Aorta (tissue), 5 donors: ENCODE measurements at regions of chr14 and their contacts with region 1.

Region 1: GRCh38 chr14:68627880-68628607 is 164.8 kb downstream of the ZFP36L1 start:
- DNase-seq: peak; percentile 63 to 74
- ATAC-seq: no peak
- H3K4me3 ChIP-seq: no peak overlapping the region
- H3K27ac ChIP-seq: no peak overlapping the region
- H3K4me1 ChIP-seq: peaks cover 0 to 3% of the 10 kb centered on the region in 2 donors
- H3K27me3 ChIP-seq: no peaks in the 10 kb centered on the region

Region 2: DNA sequence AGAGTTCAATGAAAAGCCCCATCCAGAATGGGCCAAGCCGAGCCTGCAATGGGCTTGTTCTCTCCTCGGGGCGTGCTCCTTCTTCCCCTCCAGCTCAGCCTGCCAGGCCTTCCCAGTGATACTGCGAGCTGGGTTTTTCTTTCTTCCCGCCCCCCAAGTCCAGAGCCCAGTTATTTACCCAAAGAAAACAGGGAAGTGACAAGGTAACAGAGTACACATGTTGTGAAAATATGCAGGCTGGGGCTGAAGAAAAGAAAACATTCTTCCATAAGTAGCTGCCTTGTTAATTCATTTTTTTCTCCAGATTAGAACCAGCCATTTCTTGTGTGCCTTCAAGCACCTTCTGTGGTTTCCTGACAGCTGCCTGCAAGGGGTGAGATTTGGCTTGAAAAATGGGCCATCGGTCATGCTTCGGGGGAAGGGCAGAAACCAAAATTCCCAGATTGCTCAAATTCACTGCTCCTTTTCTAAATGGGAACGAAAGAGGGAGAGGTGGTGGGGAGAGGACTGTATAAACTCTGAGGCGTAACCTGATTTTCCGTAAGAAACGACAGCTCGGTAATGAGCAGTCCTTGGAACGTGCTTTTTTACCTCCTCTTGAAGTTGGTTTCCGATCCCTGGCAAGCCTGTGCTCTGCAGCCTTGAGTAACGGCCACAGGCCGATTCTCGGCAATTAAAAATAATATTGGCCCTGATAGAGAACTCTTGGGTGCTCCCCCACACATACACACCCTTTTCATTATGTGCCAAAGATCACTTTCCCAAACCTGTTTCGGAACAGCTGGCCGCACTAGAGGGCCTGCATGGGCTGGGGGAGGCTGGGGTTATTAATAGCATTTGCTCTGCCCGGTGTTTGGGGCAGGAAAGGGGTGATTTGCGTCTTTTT is 64.6 kb before region 1 on chr14:
- intact Hi-C with region 1: loop called in 1 of 2 experiments (anchors 5 kb)
- DNase-seq: no peak
- ATAC-seq: peak; percentile 64
- H3K4me3 ChIP-seq: no peak overlapping the region
- H3K27ac ChIP-seq: peak overlapping the region; percentile 91 to 99
- H3K4me1 ChIP-seq: peaks cover 0 to 6% of the 10 kb centered on the region in 2 donors
- H3K27me3 ChIP-seq: no peaks in the 10 kb centered on the region

Region 3: DNA sequence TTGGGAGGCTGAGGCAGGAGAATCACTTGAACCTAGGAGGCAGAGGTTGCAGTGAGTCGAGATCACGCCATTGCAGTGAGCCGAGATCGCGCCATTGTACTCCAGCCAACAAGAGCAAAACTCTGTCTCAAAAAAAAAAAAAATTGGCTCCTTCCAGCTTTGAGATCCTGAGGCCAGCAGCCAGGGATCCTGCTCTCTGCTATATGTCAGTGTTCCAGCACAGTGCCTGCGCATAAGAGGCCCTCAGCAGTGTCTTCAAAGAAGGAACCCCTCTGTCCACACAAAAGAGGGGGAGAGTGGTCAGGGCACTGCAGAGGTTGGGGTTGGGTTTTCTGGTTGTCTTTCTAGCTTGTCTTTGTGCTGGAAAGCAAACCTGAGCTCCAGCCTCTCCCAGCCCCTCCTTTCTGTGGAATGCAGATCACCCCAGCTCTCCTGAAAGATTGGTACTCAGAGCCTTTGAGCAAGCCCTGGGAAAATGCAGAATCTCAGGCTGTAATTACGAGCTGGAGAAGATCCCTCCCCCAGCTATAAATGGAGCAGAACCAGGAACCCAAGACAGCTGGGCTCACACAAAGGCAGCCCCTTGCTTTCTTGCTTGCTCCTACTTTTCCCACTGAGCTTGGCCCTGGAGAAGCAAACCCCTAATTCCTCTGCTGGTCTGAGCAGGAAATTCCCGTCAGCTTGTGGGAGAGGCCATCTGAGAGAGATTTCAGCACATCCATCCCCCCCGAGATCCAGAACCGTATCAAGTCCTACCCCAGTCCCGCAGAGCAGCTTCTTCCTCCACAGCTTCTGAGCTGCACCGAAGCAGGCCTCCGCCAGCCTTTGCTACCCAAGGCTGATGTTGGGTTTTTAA is 40.9 kb before region 1 on chr14:
- intact Hi-C with region 1: no loop called
- DNase-seq: no peak
- ATAC-seq: no peak
- H3K4me3 ChIP-seq: no peak overlapping the region
- H3K27ac ChIP-seq: no peak overlapping the region
- H3K4me1 ChIP-seq: no peaks in the 10 kb centered on the region
- H3K27me3 ChIP-seq: no peaks in the 10 kb centered on the region

Region 4: DNA sequence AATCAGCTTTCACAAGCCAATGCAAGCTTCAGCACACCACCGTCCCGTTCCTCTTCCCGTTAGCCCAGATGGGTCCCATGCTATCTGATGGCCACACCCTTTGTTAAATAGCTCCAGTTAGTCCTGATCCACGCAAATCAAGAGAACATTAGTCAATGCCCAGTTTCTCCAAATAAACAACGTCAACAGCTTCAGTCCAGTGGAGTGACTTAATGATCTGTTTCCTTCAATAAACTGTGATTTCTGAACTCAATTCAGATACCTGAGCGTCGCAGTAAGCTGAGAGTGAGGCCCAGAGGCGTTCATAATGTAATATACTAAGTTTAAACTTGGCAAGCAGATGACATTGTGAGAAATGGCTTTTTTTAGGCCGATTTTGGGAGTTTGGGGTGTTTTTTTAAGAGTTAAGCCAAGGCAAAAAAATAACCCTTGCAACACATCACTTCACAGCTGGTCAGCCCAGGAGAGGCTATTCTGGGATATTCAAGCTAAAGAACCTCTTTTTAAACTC is 52.6 kb after region 1 on chr14:
- intact Hi-C with region 1: loop called in 1 of 2 experiments (anchors 2 kb)
- DNase-seq: peak in 1 of 2 donors; percentile 57
- ATAC-seq: peak; percentile 44
- H3K4me3 ChIP-seq: no peak overlapping the region
- H3K27ac ChIP-seq: peak overlapping the region; percentile 30 to 86
- H3K4me1 ChIP-seq: peaks cover 2 to 13% of the 10 kb centered on the region in 2 donors
- H3K27me3 ChIP-seq: no peaks in the 10 kb centered on the region